GM10248 (cell line): ENCODE measurements at regions of chr16 and their contacts with region 1.

Region 1: GRCh38 chr16:56700195-56700594 is 17.9 kb downstream of the MT1X start:
- DNase-seq: no peak
- CTCF ChIP-seq: no peak

Region 2: GRCh38 chr16:55944377-55944802 is 755.8 kb before region 1 on chr16:
- CTCF ChIA-PET with region 1: interaction called, 17 read pairs
- POLR2A ChIA-PET with region 1: no interaction called
- DNase-seq: peak; percentile 31
- CTCF ChIP-seq: peak; percentile 90

Region 3: GRCh38 chr16:56571525-56571924 is 128.7 kb before region 1 on chr16:
- CTCF ChIA-PET with region 1: interaction called, 73 read pairs
- POLR2A ChIA-PET with region 1: no interaction called
- DNase-seq: no peak
- CTCF ChIP-seq: no peak

Region 4: DNA sequence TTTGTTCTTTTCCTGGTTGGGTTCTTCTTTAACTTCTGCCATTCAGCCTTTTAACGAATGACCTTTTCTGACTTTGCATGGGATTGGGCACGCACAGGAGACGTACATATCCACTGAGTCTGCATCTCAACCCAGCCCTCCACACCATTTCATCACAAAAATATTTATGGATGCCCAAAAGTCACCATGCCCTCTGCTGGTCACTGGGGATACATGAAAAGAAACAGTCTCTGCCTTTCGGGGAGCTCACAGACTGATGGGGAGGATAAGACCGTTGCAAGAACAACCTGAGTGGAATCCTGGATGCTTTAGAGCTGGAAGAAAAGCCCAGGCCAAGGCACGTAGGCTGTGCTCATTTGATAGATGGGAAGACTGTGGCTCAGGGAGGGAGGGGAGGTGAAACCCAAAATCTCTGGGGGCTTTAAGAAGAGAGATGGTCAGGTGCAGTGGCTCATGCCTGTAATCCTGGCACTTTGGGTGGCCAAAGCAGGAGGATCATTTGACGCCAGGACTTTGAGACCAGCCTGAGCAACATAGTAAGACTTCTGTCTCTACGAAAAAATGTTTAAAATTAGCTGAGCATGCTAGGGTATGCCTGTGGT is 99.7 kb before region 1 on chr16:
- CTCF ChIA-PET with region 1: interaction called, 35 read pairs
- POLR2A ChIA-PET with region 1: no interaction called
- DNase-seq: peak; percentile 57
- CTCF ChIP-seq: peak; percentile 63

Region 5: DNA sequence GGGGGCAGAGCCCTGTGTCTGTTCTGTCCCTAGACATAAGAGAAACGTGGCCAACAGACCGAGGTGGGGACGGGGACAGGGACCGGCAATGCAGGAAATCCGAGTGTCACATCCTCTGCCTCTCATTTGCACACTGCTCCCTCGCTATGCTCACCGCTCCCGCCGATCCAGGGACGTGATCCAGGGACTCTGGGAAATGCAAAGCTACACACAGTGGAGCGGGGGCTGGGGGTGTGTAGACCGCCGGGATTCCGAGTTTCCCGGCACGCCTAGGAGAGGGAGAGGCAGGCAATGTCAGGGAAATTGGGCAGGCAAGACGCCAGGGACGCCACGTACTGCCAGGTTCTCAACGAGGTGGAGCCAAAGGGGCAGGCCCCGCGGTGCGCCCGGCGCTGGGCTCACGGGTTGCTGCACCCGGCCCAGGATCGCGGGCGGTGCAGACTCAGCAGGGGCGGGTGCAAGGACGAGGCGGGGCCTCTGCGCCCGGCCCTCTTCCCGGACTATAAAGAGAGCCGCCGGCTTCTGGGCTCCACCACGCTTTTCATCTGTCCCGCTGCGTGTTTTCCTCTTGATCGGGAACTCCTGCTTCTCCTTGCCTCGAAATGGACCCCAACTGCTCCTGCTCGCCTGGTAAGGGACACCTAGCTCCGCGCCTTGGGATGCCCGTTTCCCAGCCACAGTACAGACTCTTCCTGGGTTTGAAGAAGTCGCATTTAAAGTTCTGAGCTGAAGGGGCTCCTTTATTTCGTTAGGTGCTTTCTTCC is 18.1 kb before region 1 on chr16 and contains the start of gene MT1X:
- CTCF ChIA-PET with region 1: interaction called, 17 read pairs
- POLR2A ChIA-PET with region 1: interaction called, 8 read pairs
- DNase-seq: peak; percentile 90
- CTCF ChIP-seq: no peak

Region 6: GRCh38 chr16:57023541-57024249 is 323.5 kb after region 1 on chr16:
- CTCF ChIA-PET with region 1: no interaction called
- POLR2A ChIA-PET with region 1: interaction called, 12 read pairs
- DNase-seq: no peak
- CTCF ChIP-seq: no peak